OCI-LY7 (cell line): ENCODE measurements at regions of chr15 and their contacts with region 1.

Region 1: DNA sequence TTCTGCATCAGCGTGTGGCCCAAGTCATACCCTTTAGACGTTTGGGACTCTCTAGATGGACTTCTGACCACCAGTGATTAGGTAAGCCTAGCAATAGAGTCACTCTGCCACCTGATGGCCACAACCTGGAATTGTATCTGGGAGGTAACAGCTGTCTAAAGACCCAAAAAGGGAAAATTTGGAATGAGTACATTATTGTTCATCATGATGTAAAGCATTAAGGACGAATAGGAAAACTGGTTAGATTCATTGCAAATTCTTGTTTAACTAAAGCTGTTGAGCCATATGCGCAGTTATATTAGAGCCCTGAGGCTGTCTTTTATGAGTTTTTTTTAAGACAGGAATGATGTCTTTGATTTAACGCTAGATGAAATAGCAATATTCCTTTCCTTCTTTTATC is 63.6 kb downstream of the FAM81A start:
- DNase-seq: peak; percentile 66
- H3K4me3 ChIP-seq: no peak overlapping the region
- H3K27ac ChIP-seq: no peak overlapping the region
- H3K4me1 ChIP-seq: no peaks in the 10 kb centered on the region
- CTCF ChIP-seq: peak; percentile 96

Region 2: GRCh38 chr15:58994906-58995453 is 506.6 kb before region 1 on chr15:
- CTCF ChIA-PET with region 1: no interaction called
- POLR2A ChIA-PET with region 1: interaction called, 10 read pairs
- intact Hi-C with region 1: no loop called
- DNase-seq: no peak
- H3K4me3 ChIP-seq: no peak overlapping the region
- H3K27ac ChIP-seq: no peak overlapping the region
- H3K4me1 ChIP-seq: peaks cover under 1% of the 10 kb centered on the region
- CTCF ChIP-seq: no peak

Region 3: DNA sequence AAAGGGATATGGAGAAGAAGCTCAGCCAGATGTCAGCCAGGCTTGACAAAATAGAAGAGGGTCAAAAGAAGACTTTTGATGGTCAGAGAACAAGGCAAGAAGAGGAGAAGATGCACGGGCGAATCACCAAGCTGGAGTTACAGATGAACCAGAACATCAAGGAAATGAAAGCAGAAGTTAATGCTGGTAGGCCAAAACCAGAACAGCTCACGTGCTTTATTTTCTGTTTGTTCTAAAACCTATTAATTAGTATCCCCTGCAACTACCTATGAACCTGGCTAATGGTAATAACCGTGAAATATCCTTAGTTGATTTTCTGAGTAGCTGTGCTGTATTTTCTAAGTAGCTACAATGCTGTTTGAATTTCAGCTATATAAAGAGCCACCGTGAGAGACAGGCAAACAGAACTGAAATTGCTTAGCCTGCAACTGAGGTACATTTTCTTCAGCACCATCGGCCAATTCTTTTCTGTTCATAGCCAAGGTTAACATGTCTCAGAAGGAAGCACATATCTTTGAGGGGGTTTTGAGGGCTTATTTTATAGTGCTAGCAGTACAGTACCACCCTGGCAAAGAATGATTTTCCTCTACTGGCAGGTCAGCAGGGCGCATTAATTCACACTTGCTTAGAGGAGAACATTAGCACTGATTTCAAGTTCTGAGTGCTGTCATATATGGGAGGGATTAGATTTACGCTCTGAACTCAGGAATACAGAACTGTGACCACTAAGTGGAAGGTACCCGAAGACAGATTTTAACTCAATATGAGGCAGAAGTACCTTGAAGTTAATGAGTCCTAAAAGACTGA is 15.3 kb after region 1 on chr15:
- CTCF ChIA-PET with region 1: no interaction called
- POLR2A ChIA-PET with region 1: interaction called, 11 read pairs
- intact Hi-C with region 1: no loop called
- DNase-seq: peak; percentile 73
- H3K4me3 ChIP-seq: peak overlapping the region; percentile 35
- H3K27ac ChIP-seq: peak overlapping the region; percentile 78
- H3K4me1 ChIP-seq: peaks cover 29% of the 10 kb centered on the region
- CTCF ChIP-seq: no peak

Region 4: DNA sequence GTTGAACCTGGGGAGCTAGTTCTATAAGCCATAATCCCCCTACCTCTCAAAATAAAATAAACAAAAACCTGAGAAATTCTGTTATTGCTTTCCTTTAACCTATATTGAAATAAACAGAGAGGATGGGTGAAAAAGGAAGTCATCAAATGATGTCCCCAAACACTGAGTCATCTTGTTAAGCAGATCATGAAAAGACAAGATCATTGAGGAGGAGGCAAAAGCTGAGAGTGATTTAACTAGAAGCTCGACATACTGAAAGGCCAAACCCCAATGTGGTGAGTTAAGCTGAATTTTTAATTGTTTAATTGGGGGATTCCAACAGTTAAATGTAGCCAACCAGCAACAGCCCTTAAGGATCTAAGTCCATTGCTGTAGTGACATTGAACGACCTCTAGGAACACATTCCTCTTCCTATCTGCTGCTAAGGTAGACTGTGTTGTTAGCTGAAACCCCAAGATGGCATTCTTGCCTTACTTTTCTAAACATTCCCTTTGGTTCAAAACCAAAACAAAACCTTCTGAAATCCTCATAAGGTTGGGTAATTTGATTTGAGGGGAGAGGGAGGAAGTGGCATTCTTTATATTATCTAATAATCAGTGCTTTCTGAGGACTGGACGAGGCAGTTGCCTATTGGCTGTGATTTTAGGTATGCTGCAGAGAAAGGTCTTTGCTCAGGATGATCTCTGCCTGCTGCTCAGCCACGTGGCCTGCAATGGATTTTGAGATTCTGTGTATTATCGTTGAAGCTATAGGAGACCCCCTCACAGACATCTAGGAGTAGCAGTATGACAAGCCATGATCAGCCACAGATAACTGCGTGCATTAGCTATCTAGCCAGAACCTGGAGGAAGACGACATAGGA is 250.2 kb after region 1 on chr15:
- CTCF ChIA-PET with region 1: no interaction called
- POLR2A ChIA-PET with region 1: no interaction called
- intact Hi-C with region 1: no loop called
- DNase-seq: peak; percentile 11
- H3K4me3 ChIP-seq: no peak overlapping the region
- H3K27ac ChIP-seq: no peak overlapping the region
- H3K4me1 ChIP-seq: no peaks in the 10 kb centered on the region
- CTCF ChIP-seq: peak; percentile 57